ENCODE measurements at regions of chr1 and their contacts with region 1.

Region 1: GRCh38 chr1:110209715-110210603 is at the start of gene KCNC4:
- DNase-seq: peak; percentile 83 to 87
- H3K4me3 ChIP-seq: peak within 1 kb of the TSS; percentile 79 to 98 (median 90)
- H3K27ac ChIP-seq: peak within 1 kb of the TSS; percentile 95 to 96
- H3K4me1 ChIP-seq: peaks cover 3 to 14% of the 10 kb centered on the region in 2 donors
- H3K27me3 ChIP-seq: no peaks in the 10 kb centered on the region
- CTCF ChIP-seq: no peak
- POLR2A ChIP-seq: no peak
- total RNA-seq, gene KCNC4: 3.8 to 12.6 (median 5.2) TPM

Region 2: GRCh38 chr1:109931189-109931731 is 278.7 kb before region 1 on chr1:
- intact Hi-C with region 1: no loop called
- DNase-seq: peak; percentile 62 to 81
- H3K4me3 ChIP-seq: no peak overlapping the region
- H3K27ac ChIP-seq: peak overlapping the region; percentile 82 to 87
- H3K4me1 ChIP-seq: peaks cover 18 to 37% of the 10 kb centered on the region in 2 donors
- H3K27me3 ChIP-seq: no peaks in the 10 kb centered on the region
- CTCF ChIP-seq: no peak
- POLR2A ChIP-seq: no peak

Region 3: GRCh38 chr1:109984456-109985275 is 225.3 kb before region 1 on chr1 and contains the start of gene AHCYL1:
- intact Hi-C with region 1: no loop called
- DNase-seq: peak; percentile 99 to 100
- H3K4me3 ChIP-seq: peak within 1 kb of the TSS; percentile 68 to 88 (median 85)
- H3K27ac ChIP-seq: peak within 1 kb of the TSS; percentile 95 to 97
- H3K4me1 ChIP-seq: peaks cover 0 to 25% of the 10 kb centered on the region in 2 donors
- H3K27me3 ChIP-seq: no peaks in the 10 kb centered on the region
- CTCF ChIP-seq: peak; percentile 97 to 100 (median 99)
- POLR2A ChIP-seq: peak; percentile 98
- total RNA-seq, gene AHCYL1: 67.7 to 75.1 (median 73.8) TPM

Region 4: GRCh38 chr1:110155878-110156522 is 54.0 kb before region 1 on chr1:
- intact Hi-C with region 1: no loop called
- DNase-seq: peak; percentile 39 to 69
- H3K4me3 ChIP-seq: no peak overlapping the region
- H3K27ac ChIP-seq: no peak overlapping the region
- H3K4me1 ChIP-seq: peaks cover 0 to under 1% of the 10 kb centered on the region in 2 donors
- H3K27me3 ChIP-seq: peaks cover 0 to 30% of the 10 kb centered on the region in 2 donors
- CTCF ChIP-seq: no peak
- POLR2A ChIP-seq: no peak

Region 5: GRCh38 chr1:110272045-110272444 is 62.1 kb after region 1 on chr1:
- intact Hi-C with region 1: no loop called
- DNase-seq: no peak
- H3K4me3 ChIP-seq: no peak overlapping the region
- H3K27ac ChIP-seq: no peak overlapping the region
- H3K4me1 ChIP-seq: no peaks in the 10 kb centered on the region
- H3K27me3 ChIP-seq: no peaks in the 10 kb centered on the region
- CTCF ChIP-seq: no peak
- POLR2A ChIP-seq: no peak

Region 6: DNA sequence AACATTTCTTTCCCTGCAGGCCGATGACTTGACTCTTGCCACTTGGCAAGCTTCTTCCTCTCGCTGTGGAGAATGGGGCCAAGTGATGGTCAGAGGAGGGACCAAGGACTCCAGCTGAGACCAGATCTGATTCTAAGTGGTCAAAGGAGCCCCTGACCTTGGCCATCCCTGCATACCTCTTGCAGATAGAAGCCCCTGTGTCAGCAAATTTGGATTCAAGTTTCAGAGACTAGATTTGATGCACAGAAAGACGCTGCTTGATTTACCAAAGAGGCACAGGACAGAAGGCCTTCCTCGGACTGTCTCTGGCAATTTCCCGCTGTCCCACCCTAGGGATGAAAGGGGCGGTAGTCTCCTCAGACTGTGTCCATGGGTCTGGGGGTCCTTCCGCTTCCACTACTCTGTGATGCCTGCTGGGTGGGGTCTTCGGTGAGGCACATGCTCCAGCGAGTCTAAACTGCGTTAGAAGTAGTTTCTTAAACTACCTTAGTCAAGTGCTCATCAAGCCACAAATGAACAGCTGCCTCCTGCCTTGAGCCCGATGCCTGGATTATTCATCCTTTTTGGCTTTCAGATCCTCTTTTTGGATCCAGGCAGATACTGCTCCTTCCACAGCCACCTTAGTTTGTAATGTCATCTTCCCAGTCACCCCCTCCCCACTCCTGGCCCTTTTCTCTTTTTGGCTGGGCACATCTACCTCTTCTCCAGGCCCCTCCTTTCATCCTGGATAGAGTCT is 97.4 kb after region 1 on chr1:
- intact Hi-C with region 1: loop called (anchors 1 kb)
- DNase-seq: no peak
- H3K4me3 ChIP-seq: no peak overlapping the region
- H3K27ac ChIP-seq: peak overlapping the region in 1 of 2 donors; percentile 9
- H3K4me1 ChIP-seq: peaks cover under 1 to 2% of the 10 kb centered on the region in 2 donors
- H3K27me3 ChIP-seq: no peaks in the 10 kb centered on the region
- CTCF ChIP-seq: no peak
- POLR2A ChIP-seq: no peak

Region 7: DNA sequence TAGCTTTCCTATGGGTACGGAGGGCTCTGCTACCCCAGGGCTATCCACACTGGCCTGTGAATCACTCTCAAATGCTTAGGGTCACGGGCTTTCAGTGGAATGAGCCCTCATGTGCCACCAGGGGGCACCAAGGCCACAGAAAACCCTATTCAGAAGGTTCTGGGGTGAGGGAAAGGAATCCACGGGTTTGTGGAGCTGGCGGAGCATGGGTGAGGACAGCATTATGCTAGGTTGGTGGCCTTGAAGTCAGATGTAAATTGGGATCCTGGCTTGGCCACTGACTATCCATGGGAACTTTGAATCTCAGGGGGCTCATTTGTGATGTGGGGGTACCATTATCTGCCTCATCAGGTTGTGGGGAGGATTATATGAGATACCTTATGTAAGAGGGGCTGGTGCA is 202.6 kb after region 1 on chr1:
- intact Hi-C with region 1: loop called (anchors 5 kb)
- DNase-seq: peak; percentile 44 to 54
- H3K4me3 ChIP-seq: no peak overlapping the region
- H3K27ac ChIP-seq: no peak overlapping the region
- H3K4me1 ChIP-seq: no peaks in the 10 kb centered on the region
- H3K27me3 ChIP-seq: no peaks in the 10 kb centered on the region
- CTCF ChIP-seq: peak; percentile 55 to 79 (median 66)
- POLR2A ChIP-seq: no peak